ENCODE measurements at regions of chr20 and their contacts with region 1.

Region 1: DNA sequence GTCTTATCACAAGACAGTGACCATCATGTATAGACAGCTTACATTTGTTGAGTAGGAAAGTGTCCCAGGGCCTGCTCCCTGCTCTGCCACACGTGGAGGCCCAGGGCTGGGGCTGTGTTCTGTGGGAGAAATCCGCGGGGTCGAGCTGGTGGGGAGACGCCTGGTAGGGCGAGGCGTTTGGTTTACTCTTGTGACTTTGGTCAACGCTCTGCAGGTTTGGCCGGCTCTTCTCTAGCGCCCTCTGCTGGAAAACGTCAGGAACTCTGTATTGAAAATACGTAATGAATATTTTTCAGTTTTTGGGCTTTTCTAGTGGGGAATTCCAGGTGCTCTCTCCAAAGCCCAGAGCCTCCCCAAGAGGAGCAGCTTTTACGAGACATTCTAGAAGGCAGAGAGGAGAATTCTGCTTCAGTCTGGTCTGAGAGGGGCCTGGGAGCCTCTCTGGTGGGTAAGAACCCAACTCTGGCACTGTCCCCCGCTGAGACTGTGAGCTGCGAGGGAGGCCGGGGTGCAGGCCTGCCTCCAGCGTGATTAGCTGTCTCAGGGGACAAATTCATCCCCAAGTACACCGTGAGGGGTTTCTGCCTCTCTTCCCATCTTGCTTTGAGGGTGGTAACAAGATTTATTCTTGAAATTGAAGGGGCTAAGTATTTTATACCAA is 112.6 kb upstream of the RALGAPA2 start:
- DNase-seq: peak; percentile 52 to 77 (median 64)
- H3K4me3 ChIP-seq: no peak overlapping the region
- H3K27ac ChIP-seq: no peak overlapping the region
- H3K4me1 ChIP-seq: no peaks in the 10 kb centered on the region
- H3K27me3 ChIP-seq: no peaks in the 10 kb centered on the region
- CTCF ChIP-seq: peak; percentile 63 to 90 (median 74)
- POLR2A ChIP-seq: no peak

Region 2: DNA sequence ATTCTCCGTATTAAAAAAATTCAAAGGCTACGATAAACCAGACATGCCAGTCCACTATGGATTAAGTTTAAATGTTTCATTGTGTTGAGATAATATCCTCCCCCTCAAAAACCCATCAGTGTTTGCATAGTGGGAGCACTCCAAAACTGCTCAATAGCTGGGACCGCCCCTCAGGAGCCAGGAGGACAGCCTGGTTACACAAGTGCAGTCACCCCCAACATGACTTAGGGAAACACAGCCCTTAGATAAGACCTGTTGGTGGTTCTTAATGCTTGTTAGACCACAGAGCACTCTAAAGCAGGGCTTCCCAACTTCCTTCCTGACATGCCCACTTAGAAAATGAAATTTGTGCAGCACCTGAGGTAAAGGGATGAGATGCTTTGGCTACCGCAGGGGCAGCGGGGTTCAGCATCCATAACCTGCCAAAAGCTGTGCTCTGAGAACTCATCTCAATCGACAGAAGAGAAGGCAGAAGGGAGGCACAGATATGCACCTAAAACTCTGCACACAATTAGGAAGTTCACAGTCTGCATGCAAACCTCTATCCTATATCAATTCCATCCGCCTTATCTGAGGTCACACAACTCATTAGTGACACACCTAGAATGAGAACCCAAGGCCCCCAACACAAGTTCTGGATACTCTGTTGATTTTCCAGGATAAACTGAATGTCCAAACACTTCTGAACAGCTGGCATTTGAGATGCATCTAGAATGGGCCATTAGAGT is 186.9 kb before region 1 on chr20:
- intact Hi-C with region 1: no loop called
- DNase-seq: no peak
- H3K4me3 ChIP-seq: no peak overlapping the region
- H3K27ac ChIP-seq: no peak overlapping the region
- H3K4me1 ChIP-seq: no peaks in the 10 kb centered on the region
- H3K27me3 ChIP-seq: no peaks in the 10 kb centered on the region
- CTCF ChIP-seq: no peak
- POLR2A ChIP-seq: no peak

Region 3: GRCh38 chr20:20664795-20665589 is 160.1 kb before region 1 on chr20:
- intact Hi-C with region 1: loop called (anchors 2 to 5 kb)
- DNase-seq: peak in 3 of 7 donors; percentile 23 to 29 (median 25)
- H3K4me3 ChIP-seq: no peak overlapping the region
- H3K27ac ChIP-seq: no peak overlapping the region
- H3K4me1 ChIP-seq: peaks cover 0 to 9% of the 10 kb centered on the region in 2 donors
- H3K27me3 ChIP-seq: no peaks in the 10 kb centered on the region
- CTCF ChIP-seq: peak; percentile 37 to 63 (median 57)
- POLR2A ChIP-seq: no peak

Region 4: GRCh38 chr20:20699144-20699543 is 125.9 kb before region 1 on chr20:
- intact Hi-C with region 1: no loop called
- DNase-seq: no peak
- H3K4me3 ChIP-seq: no peak overlapping the region
- H3K27ac ChIP-seq: no peak overlapping the region
- H3K4me1 ChIP-seq: peaks cover 2 to 6% of the 10 kb centered on the region in 2 donors
- H3K27me3 ChIP-seq: no peaks in the 10 kb centered on the region
- CTCF ChIP-seq: no peak
- POLR2A ChIP-seq: no peak

Region 5: GRCh38 chr20:20721369-20721888 is 103.6 kb before region 1 on chr20:
- intact Hi-C with region 1: loop called in 1 of 2 experiments (anchors 10 kb)
- DNase-seq: no peak
- H3K4me3 ChIP-seq: no peak overlapping the region
- H3K27ac ChIP-seq: no peak overlapping the region
- H3K4me1 ChIP-seq: no peaks in the 10 kb centered on the region
- H3K27me3 ChIP-seq: no peaks in the 10 kb centered on the region
- CTCF ChIP-seq: no peak
- POLR2A ChIP-seq: no peak